ENCODE measurements at regions of chr6 and their contacts with region 1.

Region 1: GRCh38 chr6:155327326-155328073 is 13.2 kb upstream of the TFB1M start:
- DNase-seq: peak; percentile 31
- H3K4me3 Mint-ChIP-seq: no peak overlapping the region
- H3K27ac Mint-ChIP-seq: peak overlapping the region; percentile 51
- H3K4me1 Mint-ChIP-seq: peaks cover 34% of the 10 kb centered on the region
- H3K27me3 Mint-ChIP-seq: no peaks in the 10 kb centered on the region

Region 2: GRCh38 chr6:155426408-155426945 is 99.0 kb after region 1 on chr6:
- intact Hi-C with region 1: no loop called
- DNase-seq: no peak
- H3K4me3 Mint-ChIP-seq: no peak overlapping the region
- H3K27ac Mint-ChIP-seq: no peak overlapping the region
- H3K4me1 Mint-ChIP-seq: peaks cover 13% of the 10 kb centered on the region
- H3K27me3 Mint-ChIP-seq: no peaks in the 10 kb centered on the region

Region 3: GRCh38 chr6:155530219-155530834 is 202.8 kb after region 1 on chr6:
- intact Hi-C with region 1: loop called (anchors 1 kb)
- DNase-seq: no peak
- H3K4me3 Mint-ChIP-seq: no peak overlapping the region
- H3K27ac Mint-ChIP-seq: no peak overlapping the region
- H3K4me1 Mint-ChIP-seq: peaks cover 10% of the 10 kb centered on the region
- H3K27me3 Mint-ChIP-seq: peaks cover 4% of the 10 kb centered on the region

Region 4: DNA sequence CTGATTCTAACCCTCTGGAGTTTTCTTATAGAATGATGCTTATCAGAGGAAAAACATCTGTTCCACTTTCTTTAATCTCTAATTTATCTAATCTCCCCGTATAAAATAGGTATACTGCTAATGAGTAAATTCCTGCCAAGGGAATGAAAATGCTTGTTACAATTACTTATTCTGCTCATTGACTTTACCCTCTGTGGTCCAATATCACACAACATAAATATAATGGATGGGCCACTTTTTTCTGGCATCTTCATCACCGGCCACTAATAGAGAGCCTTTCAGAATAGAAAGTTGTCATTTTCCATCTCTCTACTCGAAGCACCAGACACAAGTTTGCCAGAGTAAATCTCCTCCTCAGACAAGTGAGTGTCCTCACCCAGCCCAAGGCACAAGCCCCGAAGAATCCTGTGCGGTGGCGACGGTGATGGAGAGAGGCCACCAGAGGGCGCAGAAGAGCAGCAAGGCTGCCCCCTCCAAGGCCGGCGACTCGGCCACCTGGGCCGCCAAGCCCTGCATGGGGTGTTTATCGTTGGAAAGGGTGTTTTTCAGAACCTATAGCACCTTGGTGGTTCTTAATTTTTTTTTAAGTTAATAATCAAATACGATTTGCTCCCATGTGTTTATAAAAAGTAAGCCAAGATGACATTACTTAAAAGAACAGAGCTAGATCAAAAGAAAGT is 1236.8 kb after region 1 on chr6:
- intact Hi-C with region 1: loop called (anchors 1 kb)
- DNase-seq: peak; percentile 65
- H3K4me3 Mint-ChIP-seq: no peak overlapping the region
- H3K27ac Mint-ChIP-seq: no peak overlapping the region
- H3K4me1 Mint-ChIP-seq: peaks cover 7% of the 10 kb centered on the region
- H3K27me3 Mint-ChIP-seq: peaks cover 3% of the 10 kb centered on the region

Region 5: GRCh38 chr6:157184202-157185020 is 1856.9 kb after region 1 on chr6:
- intact Hi-C with region 1: loop called (anchors 10 kb)
- DNase-seq: peak; percentile 37
- H3K4me3 Mint-ChIP-seq: no peak overlapping the region
- H3K27ac Mint-ChIP-seq: peak overlapping the region; percentile 64
- H3K4me1 Mint-ChIP-seq: peaks cover 25% of the 10 kb centered on the region
- H3K27me3 Mint-ChIP-seq: no peaks in the 10 kb centered on the region

Measured in activated T-helper 1 cell treated with anti-CD3 and anti-CD28 coated beads, Interleukin-12 subunit alpha, Interleukin-12 subunit beta, Interleukin-2, Interleukin-4 antibody, amounts not matched to agents 30 ng/mL and 10 ng/mL and 1 ng/mL, durations not matched to agents 14 hours and 24 hours and 36 hours (primary cell).